ENCODE measurements at regions of chr5 and their contacts with region 1.

Region 1: GRCh38 chr5:149448831-149449714 is 70.0 kb upstream of the IL17B start:
- DNase-seq: peak; percentile 47
- H3K4me3 ChIP-seq: no peak overlapping the region
- H3K27ac ChIP-seq: no peak overlapping the region
- H3K4me1 ChIP-seq: peaks cover 8% of the 10 kb centered on the region
- CTCF ChIP-seq: peak; percentile 74

Region 2: GRCh38 chr5:149680810-149681221 is 231.7 kb after region 1 on chr5:
- CTCF ChIA-PET with region 1: no interaction called
- POLR2A ChIA-PET with region 1: interaction called, 11 read pairs
- intact Hi-C with region 1: no loop called
- DNase-seq: peak; percentile 84
- H3K4me3 ChIP-seq: no peak overlapping the region
- H3K27ac ChIP-seq: peak overlapping the region; percentile 41
- H3K4me1 ChIP-seq: peaks cover 19% of the 10 kb centered on the region
- CTCF ChIP-seq: no peak